Mucosa of descending colon (tissue), 3 donors: ENCODE measurements at regions of chr4 and their contacts with region 1.

Region 1: DNA sequence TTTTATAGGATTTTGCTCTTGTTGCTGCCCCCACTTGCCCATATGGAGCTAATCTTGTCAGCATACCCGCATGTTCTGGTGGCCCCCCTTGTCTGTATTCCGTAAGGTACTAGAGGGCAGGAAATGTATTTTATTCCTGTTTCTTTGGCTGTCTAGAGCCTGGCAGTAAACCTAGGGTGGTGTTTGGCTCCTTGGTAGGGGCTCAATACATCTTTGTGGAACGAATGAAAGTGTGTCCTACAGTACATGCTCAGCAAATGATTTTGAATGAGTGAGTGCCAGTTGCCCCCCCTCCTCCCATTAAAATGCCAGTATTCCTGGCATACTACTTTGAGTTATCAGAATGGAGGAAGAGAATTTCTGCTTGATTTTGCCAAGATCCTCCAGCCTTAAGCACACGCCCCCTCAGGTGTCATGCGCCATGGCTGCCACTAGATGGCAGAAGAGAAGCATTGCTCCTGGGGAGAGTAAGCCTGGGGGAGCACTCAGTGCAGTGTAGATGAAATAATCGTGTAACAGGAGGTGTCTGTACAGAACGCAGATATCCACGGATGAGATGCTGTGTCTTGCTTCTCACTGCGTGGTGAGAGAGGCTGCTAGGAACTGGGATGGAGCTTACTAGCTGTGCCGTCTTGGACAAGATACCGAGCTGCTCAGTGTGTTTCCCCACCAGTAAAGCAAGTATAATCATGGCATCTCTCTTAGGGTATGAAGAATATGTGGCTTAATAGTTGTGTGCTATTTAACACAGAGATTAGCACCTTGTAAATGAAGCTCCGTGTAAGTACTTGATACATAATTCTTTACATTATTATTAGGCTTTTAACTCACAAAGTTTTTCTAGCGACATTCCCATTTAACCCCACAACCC is 17.2 kb upstream of the RNF212 start:
- DNase-seq: peak; percentile 63 to 81 (median 69)
- ATAC-seq: peak; percentile 99
- H3K4me3 ChIP-seq: no peak overlapping the region
- H3K4me1 ChIP-seq: no peaks in the 10 kb centered on the region
- CTCF ChIP-seq: peak; percentile 99

Region 2: DNA sequence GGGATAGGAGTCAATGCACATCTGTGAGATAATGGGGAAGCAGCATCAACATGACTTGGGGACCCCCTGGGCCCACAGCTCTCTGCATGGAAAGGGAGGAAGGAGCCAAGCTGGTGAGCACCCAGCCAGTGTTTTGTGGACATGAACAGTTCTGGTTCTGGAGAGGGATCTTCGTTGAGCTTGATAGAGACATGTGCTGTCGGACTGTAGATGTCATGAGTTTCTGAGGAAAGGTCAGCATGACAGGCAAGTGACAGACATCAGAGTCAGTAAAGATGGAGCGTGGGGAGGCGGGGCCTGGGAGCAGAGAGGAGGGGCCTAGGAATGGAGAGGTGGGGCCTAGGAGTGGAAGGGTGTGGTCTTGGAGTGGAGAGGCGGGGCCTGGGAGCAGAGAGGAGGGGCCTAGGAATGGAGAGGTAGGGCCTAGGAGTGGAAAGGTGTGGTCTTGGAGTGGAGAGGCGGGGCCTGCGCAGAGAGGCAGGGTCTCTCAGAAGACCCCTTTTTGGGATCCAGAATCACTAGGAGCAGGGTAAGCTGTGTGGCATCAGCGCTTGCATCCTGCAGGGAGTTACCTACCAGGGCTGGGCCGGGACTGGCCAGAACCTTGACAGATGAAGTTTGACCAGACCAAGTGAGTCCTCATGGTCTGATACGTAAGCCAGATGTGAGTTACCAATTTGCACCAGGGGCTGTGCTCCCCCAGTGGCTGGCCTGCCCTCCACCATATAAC is 597.8 kb before region 1 on chr4:
- intact Hi-C with region 1: no loop called
- DNase-seq: no peak
- ATAC-seq: peak; percentile 40
- H3K4me3 ChIP-seq: no peak overlapping the region
- H3K4me1 ChIP-seq: no peaks in the 10 kb centered on the region
- CTCF ChIP-seq: no peak

Region 3: DNA sequence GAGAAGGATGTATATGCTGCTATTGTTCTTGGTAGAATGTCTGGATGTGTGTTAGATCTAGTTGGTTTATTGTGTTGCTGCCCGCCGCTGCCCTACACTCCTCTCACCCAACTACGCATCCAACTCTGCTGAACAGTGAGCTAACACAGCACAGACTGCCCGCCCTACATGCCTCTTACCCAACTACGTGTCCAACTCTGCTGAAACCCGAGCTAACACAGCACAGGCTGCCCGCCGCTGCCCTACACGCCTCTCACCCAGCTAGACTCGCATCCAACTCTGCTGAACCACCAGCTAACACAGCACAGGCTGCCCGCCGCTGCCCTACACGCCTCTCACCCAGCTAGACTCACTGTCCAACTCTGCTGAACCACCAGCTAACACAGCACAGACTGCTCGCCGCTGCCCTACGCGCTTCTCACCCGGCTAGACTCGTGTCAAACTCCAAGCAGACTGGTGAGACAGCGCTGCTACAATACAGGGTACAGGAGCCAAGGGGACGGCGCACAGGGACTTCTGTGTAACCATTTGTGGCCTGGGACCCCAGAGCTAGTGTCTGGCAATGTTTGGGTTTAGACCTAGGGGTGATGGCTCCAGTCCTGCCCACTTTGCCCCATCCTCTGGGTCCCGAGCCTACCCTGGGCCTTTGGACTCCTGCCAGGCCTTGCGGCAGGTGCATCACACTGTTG is 130.0 kb after region 1 on chr4:
- intact Hi-C with region 1: loop called (anchors 10 kb)
- DNase-seq: no peak
- ATAC-seq: no peak
- H3K4me3 ChIP-seq: no peak overlapping the region
- H3K4me1 ChIP-seq: no peaks in the 10 kb centered on the region
- CTCF ChIP-seq: no peak

Region 4: GRCh38 chr4:1351854-1352633 is 221.5 kb after region 1 on chr4:
- intact Hi-C with region 1: loop called in 1 of 2 experiments (anchors 10 kb)
- DNase-seq: peak; percentile 89 to 95 (median 93)
- ATAC-seq: peak; percentile 61
- H3K4me3 ChIP-seq: no peak overlapping the region
- H3K4me1 ChIP-seq: peaks cover 7% of the 10 kb centered on the region
- CTCF ChIP-seq: peak; percentile 92

Region 5: DNA sequence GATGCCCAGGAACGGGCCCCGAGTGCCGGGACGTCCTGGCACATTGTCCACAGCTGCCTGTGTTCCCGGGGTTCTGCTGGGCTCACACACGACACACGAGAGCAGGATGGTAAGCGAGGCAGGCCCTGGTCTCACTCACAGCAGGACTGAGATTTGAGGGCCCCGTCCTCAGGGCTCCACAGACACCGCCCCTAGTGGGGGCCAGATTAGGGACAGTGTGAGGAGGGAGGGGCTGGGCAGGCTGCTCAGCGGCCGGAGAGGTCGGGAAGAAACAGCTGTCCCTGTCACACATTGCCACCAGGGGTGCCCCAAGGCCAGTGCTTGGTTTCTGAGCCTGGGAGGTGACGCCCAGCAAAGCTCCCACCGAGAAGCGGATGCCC is 246.7 kb after region 1 on chr4:
- intact Hi-C with region 1: no loop called
- DNase-seq: peak in 1 of 3 donors; percentile 16
- ATAC-seq: no peak
- H3K4me3 ChIP-seq: no peak overlapping the region
- H3K4me1 ChIP-seq: no peaks in the 10 kb centered on the region
- CTCF ChIP-seq: no peak